Sigmoid colon (tissue), 7 donors: ENCODE measurements at regions of chr19 and their contacts with region 1.

Region 1: DNA sequence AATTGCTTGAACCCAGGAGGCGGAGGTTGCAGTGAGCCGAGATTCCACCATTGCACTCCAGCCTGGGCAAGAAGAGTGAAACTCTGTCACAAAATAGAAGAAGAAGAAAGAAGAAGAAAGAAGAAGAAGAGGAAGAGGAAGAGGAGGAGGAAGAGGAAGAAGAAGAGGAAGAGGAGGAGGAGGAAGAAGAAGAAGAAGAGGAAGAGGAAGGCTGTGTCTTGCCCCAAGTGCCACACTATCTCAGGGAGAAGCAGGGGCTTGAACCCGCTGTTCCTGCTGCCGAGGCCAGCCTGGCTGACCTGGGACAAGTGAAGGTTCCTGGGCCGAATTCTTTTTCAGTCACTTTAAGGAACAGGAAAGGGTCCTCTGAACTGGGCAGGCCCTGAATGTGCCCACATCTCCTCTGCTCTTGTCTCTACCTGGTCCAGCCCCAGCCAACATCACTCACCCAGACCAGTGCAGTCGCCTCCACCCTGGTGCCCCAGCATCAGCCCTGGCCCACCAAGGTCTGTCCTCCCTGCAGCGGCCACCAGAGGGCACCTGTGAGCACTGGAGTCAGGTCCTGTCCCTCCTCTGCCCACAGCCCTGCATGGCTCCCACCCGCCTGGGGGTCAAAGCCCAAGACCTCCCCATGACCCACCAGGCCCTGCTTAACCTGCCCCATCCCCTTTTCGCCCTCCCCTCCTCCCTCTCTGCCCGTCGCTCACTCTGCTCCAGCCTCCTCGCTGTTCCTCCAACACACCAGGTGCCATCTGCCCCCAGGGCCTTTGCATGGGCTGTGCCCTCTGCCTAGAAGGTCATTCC is 20.0 kb downstream of the TICAM1 start:
- DNase-seq: peak; percentile 87
- H3K4me3 ChIP-seq: no peak overlapping the region
- H3K27ac ChIP-seq: peak overlapping the region in 2 of 4 donors; percentile 18 to 88
- H3K4me1 ChIP-seq: peaks cover 0 to 39% (median 24%) of the 10 kb centered on the region in 4 donors
- H3K27me3 ChIP-seq: no peaks in the 10 kb centered on the region
- CTCF ChIP-seq: peak; percentile 73 to 88 (median 84)
- EP300 ChIP-seq: no peak
- POLR2A ChIP-seq: no peak

Region 2: GRCh38 chr19:4831304-4831978 is 19.9 kb after region 1 on chr19 and contains the start of gene TICAM1:
- intact Hi-C with region 1: loop called (anchors 2 kb)
- DNase-seq: peak; percentile 84
- H3K4me3 ChIP-seq: peak within 1 kb of the TSS; percentile 65 to 93 (median 82)
- H3K27ac ChIP-seq: peak within 1 kb of the TSS; percentile 88 to 91 (median 88)
- H3K4me1 ChIP-seq: peaks cover 0 to 25% (median 17%) of the 10 kb centered on the region in 4 donors
- H3K27me3 ChIP-seq: no peaks in the 10 kb centered on the region
- CTCF ChIP-seq: no peak
- EP300 ChIP-seq: no peak
- POLR2A ChIP-seq: peak; percentile 51 to 82
- total RNA-seq, gene TICAM1: 3.9 to 5.3 (median 4.6) TPM

Region 3: DNA sequence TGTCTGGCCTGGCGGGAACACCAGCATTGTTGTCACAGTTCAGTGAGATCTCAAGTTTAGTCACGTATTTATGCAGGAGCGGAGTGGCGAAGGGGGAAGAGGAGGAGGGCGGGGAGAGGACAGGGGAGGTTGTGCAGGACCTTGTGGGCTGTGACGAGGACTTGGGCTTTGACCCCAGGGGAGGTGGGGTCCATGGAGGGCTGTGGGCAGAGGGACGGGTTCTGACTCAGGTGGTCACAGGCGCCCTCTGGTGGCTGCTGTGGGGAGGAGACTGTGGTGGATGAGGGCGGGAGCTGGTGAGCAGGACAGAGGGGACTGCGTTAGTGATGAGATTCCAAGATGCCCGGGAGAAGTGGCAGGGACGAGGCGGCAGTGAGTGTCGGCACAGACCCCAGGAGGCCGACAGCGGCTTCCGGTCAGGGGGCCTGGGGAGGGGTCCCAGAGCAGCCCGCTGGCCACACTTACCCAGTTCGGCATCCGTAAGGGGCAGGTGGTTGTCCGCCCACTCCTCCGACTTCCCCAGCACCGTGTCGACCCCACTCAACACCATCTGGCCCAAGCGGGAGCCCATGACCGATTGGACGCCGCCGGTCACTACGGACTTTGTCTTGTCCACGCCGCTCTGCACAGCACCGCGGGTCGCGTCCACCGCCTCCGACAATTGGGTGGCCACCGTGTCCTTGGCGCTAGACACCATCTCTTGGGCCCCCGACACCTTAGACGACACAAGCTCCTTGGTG is 40.2 kb after region 1 on chr19:
- intact Hi-C with region 1: loop called (anchors 1 kb)
- DNase-seq: peak; percentile 87
- H3K4me3 ChIP-seq: no peak overlapping the region
- H3K27ac ChIP-seq: no peak overlapping the region
- H3K4me1 ChIP-seq: no peaks in the 10 kb centered on the region
- H3K27me3 ChIP-seq: no peaks in the 10 kb centered on the region
- CTCF ChIP-seq: peak; percentile 83 to 91 (median 90)
- EP300 ChIP-seq: no peak
- POLR2A ChIP-seq: no peak

Region 4: DNA sequence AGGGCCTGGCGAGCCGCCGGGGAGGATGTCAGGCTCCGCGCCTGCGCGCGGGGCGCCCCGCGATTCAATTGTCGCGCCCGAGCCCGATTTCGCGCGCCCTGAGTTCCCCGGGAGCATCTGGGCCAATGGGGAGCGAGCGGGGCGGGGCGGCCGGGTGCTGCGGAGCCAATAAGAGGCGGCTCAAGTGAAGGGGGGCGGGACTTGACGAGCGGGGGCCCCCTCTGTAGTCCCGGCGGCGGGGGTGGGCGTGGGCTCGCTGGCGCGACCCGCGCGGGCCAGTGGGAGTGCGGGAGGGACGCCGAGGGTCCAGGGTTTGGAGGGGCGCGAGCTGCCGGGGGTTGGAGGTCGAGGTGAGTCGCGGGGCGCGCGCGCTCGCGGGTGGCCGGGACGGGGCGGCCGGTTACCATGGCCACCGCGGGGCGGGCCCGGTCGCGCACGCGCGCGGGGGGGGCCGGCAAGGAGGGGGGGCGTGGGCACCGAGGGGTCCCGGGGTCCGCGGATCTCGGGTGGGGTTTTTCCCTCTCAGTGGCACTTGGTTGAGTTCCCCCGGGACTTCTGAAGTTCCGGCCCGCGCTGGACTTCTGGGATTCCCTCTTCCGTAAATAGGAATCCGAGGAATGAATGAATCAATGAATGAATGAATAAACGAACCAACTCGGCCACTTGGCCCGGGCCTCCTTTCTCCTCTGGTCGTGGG is 98.5 kb after region 1 on chr19:
- intact Hi-C with region 1: loop called (anchors 1 kb)
- DNase-seq: peak; percentile 94
- H3K4me3 ChIP-seq: peak overlapping the region; percentile 49 to 72 (median 66)
- H3K27ac ChIP-seq: no peak overlapping the region
- H3K4me1 ChIP-seq: peaks cover 0 to 30% (median 28%) of the 10 kb centered on the region in 4 donors
- H3K27me3 ChIP-seq: peaks cover 6 to 21% (median 12%) of the 10 kb centered on the region in 3 donors
- CTCF ChIP-seq: no peak
- EP300 ChIP-seq: no peak
- POLR2A ChIP-seq: no peak